MCF 10A (cell line): ENCODE measurements at regions of chr9 and their contacts with region 1.

Region 1: GRCh38 chr9:127396808-127397497 is at the start of gene SLC2A8:
- DNase-seq: peak; percentile 100
- H3K4me3 Mint-ChIP-seq: peak within 1 kb of the TSS; percentile 74
- H3K27ac Mint-ChIP-seq: no peak within 1 kb of the TSS
- H3K4me1 Mint-ChIP-seq: peaks cover 4% of the 10 kb centered on the region
- H3K27me3 Mint-ChIP-seq: no peaks in the 10 kb centered on the region
- CTCF ChIP-seq: peak; percentile 15
- total RNA-seq, gene SLC2A8: 13.7 and 14.0 TPM in 2 replicates

Region 2: GRCh38 chr9:126581893-126582292 is 815.1 kb before region 1 on chr9:
- CTCF ChIA-PET with region 1: no interaction called
- POLR2A ChIA-PET with region 1: no interaction called
- intact Hi-C with region 1: no loop called
- DNase-seq: no peak
- H3K4me3 Mint-ChIP-seq: no peak overlapping the region
- H3K27ac Mint-ChIP-seq: no peak overlapping the region
- H3K4me1 Mint-ChIP-seq: no peaks in the 10 kb centered on the region
- H3K27me3 Mint-ChIP-seq: peaks cover 39% of the 10 kb centered on the region
- CTCF ChIP-seq: no peak

Region 3: GRCh38 chr9:126939821-126940221 is 457.1 kb before region 1 on chr9:
- CTCF ChIA-PET with region 1: no interaction called
- POLR2A ChIA-PET with region 1: no interaction called
- intact Hi-C with region 1: loop called (anchors 2 kb)
- DNase-seq: no peak
- H3K4me3 Mint-ChIP-seq: no peak overlapping the region
- H3K27ac Mint-ChIP-seq: no peak overlapping the region
- H3K4me1 Mint-ChIP-seq: no peaks in the 10 kb centered on the region
- H3K27me3 Mint-ChIP-seq: peaks cover 25% of the 10 kb centered on the region
- CTCF ChIP-seq: no peak

Region 4: GRCh38 chr9:127166651-127167524 is 230.1 kb before region 1 on chr9:
- CTCF ChIA-PET with region 1: no interaction called
- POLR2A ChIA-PET with region 1: no interaction called
- intact Hi-C with region 1: no loop called
- DNase-seq: peak; percentile 97
- H3K4me3 Mint-ChIP-seq: no peak overlapping the region
- H3K27ac Mint-ChIP-seq: peak overlapping the region; percentile 86
- H3K4me1 Mint-ChIP-seq: peaks cover 24% of the 10 kb centered on the region
- H3K27me3 Mint-ChIP-seq: no peaks in the 10 kb centered on the region
- CTCF ChIP-seq: no peak

Region 5: DNA sequence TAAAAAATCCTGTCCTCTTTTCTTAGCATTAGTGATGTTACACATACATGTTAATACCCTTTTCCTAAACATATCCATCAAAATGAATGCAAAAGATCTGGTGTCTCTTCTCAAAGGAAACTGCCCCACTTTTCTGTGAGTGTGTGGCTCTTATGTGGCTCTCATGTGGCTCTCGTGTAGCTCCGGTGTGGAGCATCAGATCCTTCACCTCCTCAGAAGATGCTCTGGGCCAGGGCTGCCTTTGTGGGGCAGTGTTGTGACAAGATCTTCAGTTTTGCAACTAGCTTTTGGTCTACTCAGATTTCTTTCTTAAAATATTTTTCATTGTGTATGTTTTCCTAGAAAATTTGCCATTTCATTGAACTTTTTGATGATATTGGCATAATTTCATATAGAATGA is 113.0 kb before region 1 on chr9:
- CTCF ChIA-PET with region 1: interaction called, 3 read pairs
- POLR2A ChIA-PET with region 1: no interaction called
- intact Hi-C with region 1: loop called (anchors 1 kb)
- DNase-seq: peak; percentile 49
- H3K4me3 Mint-ChIP-seq: no peak overlapping the region
- H3K27ac Mint-ChIP-seq: no peak overlapping the region
- H3K4me1 Mint-ChIP-seq: peaks cover 7% of the 10 kb centered on the region
- H3K27me3 Mint-ChIP-seq: no peaks in the 10 kb centered on the region
- CTCF ChIP-seq: peak; percentile 33

Region 6: GRCh38 chr9:127360829-127361228 is 36.1 kb before region 1 on chr9:
- CTCF ChIA-PET with region 1: interaction called, 4 read pairs
- POLR2A ChIA-PET with region 1: interaction called, 6 read pairs
- intact Hi-C with region 1: loop called (anchors 1 kb)
- DNase-seq: peak; percentile 67
- H3K4me3 Mint-ChIP-seq: no peak overlapping the region
- H3K27ac Mint-ChIP-seq: peak overlapping the region; percentile 88
- H3K4me1 Mint-ChIP-seq: peaks cover 10% of the 10 kb centered on the region
- H3K27me3 Mint-ChIP-seq: no peaks in the 10 kb centered on the region
- CTCF ChIP-seq: peak; percentile 39

Region 7: DNA sequence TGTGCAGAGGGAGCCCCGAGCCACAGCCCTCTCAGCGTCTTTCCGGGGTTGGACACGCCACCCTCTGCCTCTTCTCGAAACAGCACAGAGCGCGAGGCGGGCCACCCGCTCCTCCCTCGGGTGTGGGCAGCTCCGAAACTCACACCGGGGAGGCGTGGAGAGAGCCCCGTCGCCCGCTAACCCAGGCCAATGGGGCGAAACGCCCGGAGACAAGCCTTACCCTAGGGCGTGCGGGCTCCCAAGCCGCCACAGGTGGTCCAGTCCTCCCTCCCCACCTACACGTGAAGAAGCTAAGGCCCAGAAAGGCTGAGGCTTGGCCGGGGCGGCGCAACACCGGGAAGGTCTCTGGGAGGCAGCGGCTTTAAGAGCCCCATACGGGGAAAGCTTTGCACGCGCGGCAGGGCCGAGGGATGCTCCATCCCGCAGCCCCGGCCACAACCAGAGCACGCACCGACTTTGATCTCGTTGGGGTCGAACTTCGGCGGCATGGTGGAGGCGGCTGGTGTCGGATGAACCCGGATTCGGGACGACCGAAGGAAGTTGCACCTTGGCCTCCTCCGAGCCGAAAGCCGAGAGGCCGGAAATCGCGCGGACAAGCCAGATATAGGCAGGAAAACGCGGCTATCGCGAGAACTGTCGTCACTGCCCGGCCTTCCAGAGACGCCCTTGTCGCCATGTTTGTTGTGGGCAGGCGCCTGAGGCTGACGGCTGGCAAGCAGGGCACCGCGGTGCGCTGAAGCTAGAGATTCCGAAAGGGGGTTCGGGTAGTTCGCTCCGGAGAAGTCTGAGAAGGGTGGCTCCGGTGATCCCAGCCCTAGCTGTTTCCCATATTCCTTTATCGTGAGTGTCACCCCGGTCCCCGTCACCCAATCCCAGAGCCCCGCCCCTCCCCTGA is 54.1 kb after region 1 on chr9 and contains the starts of genes LRSAM1 and RPL12:
- CTCF ChIA-PET with region 1: no interaction called
- POLR2A ChIA-PET with region 1: interaction called, 23 read pairs
- intact Hi-C with region 1: no loop called
- DNase-seq: peak; percentile 94
- H3K4me3 Mint-ChIP-seq: peak within 1 kb of the TSS; percentile 93
- H3K27ac Mint-ChIP-seq: peak within 1 kb of the TSS; percentile 97
- H3K4me1 Mint-ChIP-seq: peaks cover 40% of the 10 kb centered on the region
- H3K27me3 Mint-ChIP-seq: no peaks in the 10 kb centered on the region
- CTCF ChIP-seq: no peak
- total RNA-seq, gene LRSAM1: 23.5 and 26.2 TPM in 2 replicates
- total RNA-seq, gene RPL12: 3,086 and 3,252 TPM in 2 replicates

Region 8: GRCh38 chr9:128034821-128035764 is 638.1 kb after region 1 on chr9:
- CTCF ChIA-PET with region 1: no interaction called
- POLR2A ChIA-PET with region 1: no interaction called
- intact Hi-C with region 1: no loop called
- DNase-seq: peak; percentile 88
- H3K4me3 Mint-ChIP-seq: no peak overlapping the region
- H3K27ac Mint-ChIP-seq: no peak overlapping the region
- H3K4me1 Mint-ChIP-seq: no peaks in the 10 kb centered on the region
- H3K27me3 Mint-ChIP-seq: no peaks in the 10 kb centered on the region
- CTCF ChIP-seq: peak; percentile 81